Heart right ventricle (tissue), 16 donors: ENCODE measurements at regions of chr3 and their contacts with region 1.

Region 1: GRCh38 chr3:150555859-150556436 is 9.4 kb downstream of the EIF2A start:
- DNase-seq: no peak
- ATAC-seq: no peak
- H3K4me3 ChIP-seq: no peak overlapping the region
- H3K27ac ChIP-seq: no peak overlapping the region
- H3K4me1 ChIP-seq: peaks cover 0 to 12% (median 6%) of the 10 kb centered on the region in 9 donors
- H3K27me3 ChIP-seq: no peaks in the 10 kb centered on the region
- CTCF ChIP-seq: no peak

Region 2: GRCh38 chr3:150589759-150590158 is 33.8 kb after region 1 on chr3:
- intact Hi-C with region 1: loop called in 1 of 10 experiments (anchors 5 kb)
- DNase-seq: no peak
- ATAC-seq: peak in 1 of 8 donors; percentile 25
- H3K4me3 ChIP-seq: no peak overlapping the region
- H3K27ac ChIP-seq: no peak overlapping the region
- H3K4me1 ChIP-seq: peaks cover 0 to 25% (median 4%) of the 10 kb centered on the region in 9 donors
- H3K27me3 ChIP-seq: no peaks in the 10 kb centered on the region
- CTCF ChIP-seq: no peak

Region 3: GRCh38 chr3:150710097-150710496 is 154.1 kb after region 1 on chr3:
- intact Hi-C with region 1: no loop called
- DNase-seq: no peak
- ATAC-seq: no peak
- H3K4me3 ChIP-seq: no peak overlapping the region
- H3K27ac ChIP-seq: no peak overlapping the region
- H3K4me1 ChIP-seq: peaks cover 0 to 2% (median 0%) of the 10 kb centered on the region in 9 donors
- H3K27me3 ChIP-seq: no peaks in the 10 kb centered on the region
- CTCF ChIP-seq: no peak

Region 4: DNA sequence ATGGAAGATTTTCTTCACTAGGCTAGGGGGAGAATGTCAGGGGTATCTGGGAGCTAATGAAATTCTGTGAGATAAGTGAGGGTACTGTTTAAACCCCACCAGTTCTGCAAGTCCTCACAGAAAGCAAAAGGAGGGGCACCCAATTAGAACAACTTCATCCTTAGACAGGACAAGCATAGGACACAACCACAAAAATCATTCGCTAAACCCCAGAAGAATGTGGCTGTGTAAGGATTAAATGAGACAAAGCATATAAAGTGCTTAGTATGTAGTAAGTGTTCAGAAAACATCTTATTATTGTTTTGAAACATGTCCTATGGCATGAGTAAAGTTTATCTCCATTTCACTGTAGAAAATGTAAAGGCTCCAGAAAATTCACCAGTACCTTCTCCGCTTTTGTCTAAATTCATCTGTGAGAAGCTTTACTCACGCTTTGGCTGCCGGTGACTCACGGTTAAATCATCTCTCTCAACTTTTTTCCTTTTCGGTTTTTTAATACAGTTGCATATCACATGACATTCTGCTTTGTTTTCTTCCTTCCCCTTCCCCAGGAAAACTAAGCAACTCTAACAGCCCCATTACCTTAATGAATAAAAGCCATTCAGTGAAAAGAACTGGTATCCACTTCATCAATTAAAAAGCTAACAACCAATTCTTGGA is 414.8 kb after region 1 on chr3:
- intact Hi-C with region 1: no loop called
- DNase-seq: no peak
- ATAC-seq: no peak
- H3K4me3 ChIP-seq: no peak overlapping the region
- H3K27ac ChIP-seq: no peak overlapping the region
- H3K4me1 ChIP-seq: no peaks in the 10 kb centered on the region
- H3K27me3 ChIP-seq: peaks cover 0 to 15% (median 3%) of the 10 kb centered on the region in 7 donors
- CTCF ChIP-seq: no peak